ENCODE measurements at regions of chr17 and their contacts with region 1.

Region 1: GRCh38 chr17:62065598-62066468 is 755 bp upstream of the MED13 start:
- DNase-seq: peak; percentile 92
- ATAC-seq: peak; percentile 96
- H3K4me3 Mint-ChIP-seq: peak overlapping the region; percentile 96
- H3K27ac Mint-ChIP-seq: peak overlapping the region; percentile 97
- H3K4me1 Mint-ChIP-seq: peaks cover 35% of the 10 kb centered on the region
- H3K27me3 Mint-ChIP-seq: no peaks in the 10 kb centered on the region
- CTCF ChIP-seq: peak; percentile 83

Region 2: DNA sequence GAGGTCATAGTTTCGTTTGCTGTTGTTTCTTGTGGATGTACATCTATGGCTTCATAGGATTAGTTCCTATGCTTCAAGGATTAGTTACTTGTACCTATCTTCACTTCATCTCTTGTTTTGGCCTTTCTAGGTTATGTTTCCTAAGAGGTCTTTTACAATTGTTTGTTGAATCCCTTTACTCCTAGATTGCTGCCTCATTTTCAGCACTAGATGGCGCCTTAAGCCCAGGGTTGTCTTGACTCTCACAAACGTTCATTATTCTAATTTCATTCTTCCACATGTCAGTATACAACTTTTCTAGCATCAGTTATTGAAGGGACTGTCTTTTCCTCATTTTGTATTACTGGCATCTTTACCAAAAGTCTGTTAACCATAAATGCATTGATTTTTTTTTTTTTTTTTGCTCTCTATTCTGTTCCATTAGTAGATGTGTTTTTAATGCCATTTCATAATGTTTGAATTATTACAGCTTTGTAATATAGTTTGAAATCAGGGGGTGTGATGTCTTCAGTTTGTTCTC is 429.9 kb before region 1 on chr17:
- CTCF ChIA-PET with region 1: interaction called, 3 read pairs
- POLR2A ChIA-PET with region 1: no interaction called
- intact Hi-C with region 1: loop called (anchors 2 kb)
- DNase-seq: no peak
- ATAC-seq: no peak
- H3K4me3 Mint-ChIP-seq: no peak overlapping the region
- H3K27ac Mint-ChIP-seq: no peak overlapping the region
- H3K4me1 Mint-ChIP-seq: peaks cover 10% of the 10 kb centered on the region
- H3K27me3 Mint-ChIP-seq: peaks cover 34% of the 10 kb centered on the region
- CTCF ChIP-seq: peak; percentile 70

Region 3: GRCh38 chr17:61862975-61863800 is 202.6 kb before region 1 on chr17 and contains the start of gene BRIP1:
- CTCF ChIA-PET with region 1: no interaction called
- POLR2A ChIA-PET with region 1: interaction called, 7 read pairs
- intact Hi-C with region 1: loop called (anchors 2 kb)
- DNase-seq: peak; percentile 70
- ATAC-seq: peak; percentile 99
- H3K4me3 Mint-ChIP-seq: peak within 1 kb of the TSS; percentile 94
- H3K27ac Mint-ChIP-seq: peak within 1 kb of the TSS; percentile 83
- H3K4me1 Mint-ChIP-seq: peaks cover 18% of the 10 kb centered on the region
- H3K27me3 Mint-ChIP-seq: no peaks in the 10 kb centered on the region
- CTCF ChIP-seq: no peak
- total RNA-seq, gene BRIP1: 2.0 and 2.5 TPM in 2 replicates

Region 4: DNA sequence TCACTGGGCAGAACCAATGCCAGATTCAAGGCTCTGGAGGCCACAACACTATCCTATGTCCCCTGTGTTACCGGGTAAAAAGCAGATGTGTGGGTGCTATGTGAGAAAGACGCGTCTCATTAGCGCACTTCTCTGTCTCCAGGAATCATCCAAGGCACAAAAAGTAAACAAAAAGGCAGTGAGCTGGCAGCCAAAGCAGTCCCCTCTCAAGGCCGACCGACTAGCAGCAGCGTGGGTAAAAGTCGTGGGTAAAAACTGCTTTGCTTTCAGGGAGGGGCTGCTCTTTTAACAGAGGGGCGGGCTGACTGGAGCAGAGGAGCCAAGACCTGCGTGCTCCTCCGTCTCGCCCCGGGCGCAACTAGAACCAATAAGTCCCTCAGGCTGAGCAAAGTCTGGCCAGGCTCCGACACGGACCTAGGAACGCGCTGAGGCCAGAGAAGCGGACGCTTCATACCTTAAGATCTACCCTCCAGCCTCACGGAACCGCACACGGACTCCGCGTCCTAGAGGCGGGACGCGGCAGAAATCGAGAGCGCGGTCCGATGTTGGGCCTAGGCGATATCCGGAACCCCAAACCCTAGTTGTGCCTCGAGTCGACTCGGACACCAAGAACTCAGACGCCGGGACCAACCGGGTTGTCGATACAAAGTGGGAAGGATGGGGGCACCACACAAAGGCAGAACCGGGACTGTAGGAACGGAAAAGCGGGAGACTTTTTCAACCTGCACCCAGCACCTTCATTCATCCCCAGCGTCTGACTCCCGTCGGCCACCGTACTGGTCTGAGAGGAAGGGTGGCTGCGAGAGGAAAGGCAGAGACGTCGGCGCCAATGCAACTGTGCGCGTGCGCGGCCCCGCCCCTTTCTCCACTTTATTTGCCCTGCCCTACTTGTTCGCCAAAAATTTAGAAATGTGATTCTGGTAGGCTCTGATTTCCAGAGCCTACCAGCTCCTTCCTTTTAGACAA is 138.3 kb before region 1 on chr17 and contains the start of gene INTS2:
- CTCF ChIA-PET with region 1: no interaction called
- POLR2A ChIA-PET with region 1: interaction called, 3 read pairs
- intact Hi-C with region 1: loop called (anchors 1 kb)
- DNase-seq: peak; percentile 92
- ATAC-seq: peak; percentile 92
- H3K4me3 Mint-ChIP-seq: peak within 1 kb of the TSS; percentile 90
- H3K27ac Mint-ChIP-seq: peak within 1 kb of the TSS; percentile 93
- H3K4me1 Mint-ChIP-seq: peaks cover 17% of the 10 kb centered on the region
- H3K27me3 Mint-ChIP-seq: no peaks in the 10 kb centered on the region
- CTCF ChIP-seq: no peak
- total RNA-seq, gene INTS2: 21.4 and 21.8 TPM in 2 replicates

Region 5: DNA sequence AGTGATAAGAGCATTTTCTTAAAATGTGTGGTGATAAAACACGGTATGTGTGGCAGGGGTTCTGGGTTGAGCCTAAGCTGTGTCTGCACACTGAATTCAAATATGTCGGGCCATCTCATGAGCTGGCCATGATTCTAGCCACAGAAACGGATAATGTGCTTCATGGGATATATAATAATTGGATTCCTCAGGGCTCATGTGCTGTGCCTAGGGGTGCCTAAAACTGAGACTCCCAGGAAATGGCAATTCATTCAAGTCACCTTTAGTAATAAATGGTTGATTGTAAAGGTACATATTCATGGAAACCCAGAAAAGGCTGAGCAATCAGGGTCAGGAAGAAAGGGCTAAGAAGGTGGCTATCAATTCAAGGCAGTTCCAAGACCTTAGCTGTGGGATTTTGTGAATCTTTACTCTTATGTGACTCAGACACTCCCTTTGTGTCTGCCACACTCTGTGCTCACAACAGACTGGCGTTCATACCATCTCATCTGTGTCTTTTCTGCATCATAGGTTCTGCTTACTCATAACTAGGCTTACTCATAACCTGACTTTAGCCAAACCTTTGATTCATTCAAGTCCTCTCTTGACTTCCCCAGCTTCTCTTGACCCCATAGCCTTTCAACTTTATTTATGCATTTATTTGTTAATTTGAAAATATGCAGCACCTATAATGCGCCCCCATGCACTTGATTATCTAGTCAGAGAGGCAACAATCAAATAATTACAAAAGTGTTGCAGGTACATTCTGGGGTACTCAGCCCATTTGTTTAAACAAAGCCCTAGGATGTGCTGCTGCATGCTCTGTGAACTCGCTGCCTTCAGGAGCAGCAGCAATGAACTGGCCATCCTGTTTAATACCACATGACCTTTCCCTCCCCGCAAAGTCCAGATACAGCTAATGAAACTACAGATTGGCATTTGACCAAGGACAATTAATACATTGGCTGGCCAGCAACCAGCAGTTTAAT is 27.6 kb after region 1 on chr17:
- CTCF ChIA-PET with region 1: interaction called, 5 read pairs
- POLR2A ChIA-PET with region 1: interaction called, 26 read pairs
- intact Hi-C with region 1: loop called (anchors 1 kb)
- DNase-seq: no peak
- ATAC-seq: peak; percentile 94
- H3K4me3 Mint-ChIP-seq: no peak overlapping the region
- H3K27ac Mint-ChIP-seq: peak overlapping the region; percentile 18
- H3K4me1 Mint-ChIP-seq: peaks cover 31% of the 10 kb centered on the region
- H3K27me3 Mint-ChIP-seq: no peaks in the 10 kb centered on the region
- CTCF ChIP-seq: no peak

Region 6: GRCh38 chr17:62098623-62099231 is 32.9 kb after region 1 on chr17:
- CTCF ChIA-PET with region 1: interaction called, 5 read pairs
- POLR2A ChIA-PET with region 1: interaction called, 26 read pairs
- intact Hi-C with region 1: loop called (anchors 1 kb)
- DNase-seq: no peak
- ATAC-seq: peak; percentile 81
- H3K4me3 Mint-ChIP-seq: peak overlapping the region; percentile 55
- H3K27ac Mint-ChIP-seq: peak overlapping the region; percentile 84
- H3K4me1 Mint-ChIP-seq: peaks cover 38% of the 10 kb centered on the region
- H3K27me3 Mint-ChIP-seq: no peaks in the 10 kb centered on the region
- CTCF ChIP-seq: no peak